Heart right ventricle (tissue), 16 donors: ENCODE measurements at regions of chr4 and their contacts with region 1.

Region 1: GRCh38 chr4:159278399-159278798 is 175.5 kb downstream of the RAPGEF2 start:
- DNase-seq: no peak
- ATAC-seq: peak in 2 of 8 donors; percentile 11 to 58
- H3K4me3 ChIP-seq: no peak overlapping the region
- H3K27ac ChIP-seq: peak overlapping the region in 2 of 10 donors; percentile 24 to 49
- H3K4me1 ChIP-seq: peaks cover 0 to 84% (median 39%) of the 10 kb centered on the region in 9 donors
- H3K27me3 ChIP-seq: no peaks in the 10 kb centered on the region
- CTCF ChIP-seq: no peak

Region 2: DNA sequence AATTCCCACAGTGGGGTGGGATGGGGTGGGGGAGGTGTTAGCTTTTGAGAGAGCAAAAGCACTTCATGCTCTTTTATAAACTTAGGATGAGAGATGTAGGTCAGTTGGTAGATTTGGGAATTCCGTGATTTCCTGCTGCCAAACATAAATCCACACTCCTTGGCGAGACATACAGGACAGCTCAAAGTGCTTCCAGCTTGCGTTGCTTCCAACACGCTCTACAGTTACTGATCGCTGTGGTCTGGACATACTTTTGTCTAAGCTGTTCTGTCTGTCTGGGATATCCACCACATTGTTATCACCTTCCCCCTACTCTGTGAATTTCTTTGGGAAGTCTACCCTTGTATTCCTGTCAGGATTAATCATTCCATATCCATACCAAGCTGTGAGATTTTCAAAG is 58.0 kb before region 1 on chr4:
- intact Hi-C with region 1: loop called in 1 of 10 experiments (anchors 5 kb)
- DNase-seq: no peak
- ATAC-seq: peak in 7 of 8 donors; percentile 53 to 84 (median 76)
- H3K4me3 ChIP-seq: no peak overlapping the region
- H3K27ac ChIP-seq: peak overlapping the region in 7 of 10 donors; percentile 13 to 56 (median 38)
- H3K4me1 ChIP-seq: peaks cover 6 to 79% (median 54%) of the 10 kb centered on the region in 9 donors
- H3K27me3 ChIP-seq: no peaks in the 10 kb centered on the region
- CTCF ChIP-seq: no peak

Region 3: DNA sequence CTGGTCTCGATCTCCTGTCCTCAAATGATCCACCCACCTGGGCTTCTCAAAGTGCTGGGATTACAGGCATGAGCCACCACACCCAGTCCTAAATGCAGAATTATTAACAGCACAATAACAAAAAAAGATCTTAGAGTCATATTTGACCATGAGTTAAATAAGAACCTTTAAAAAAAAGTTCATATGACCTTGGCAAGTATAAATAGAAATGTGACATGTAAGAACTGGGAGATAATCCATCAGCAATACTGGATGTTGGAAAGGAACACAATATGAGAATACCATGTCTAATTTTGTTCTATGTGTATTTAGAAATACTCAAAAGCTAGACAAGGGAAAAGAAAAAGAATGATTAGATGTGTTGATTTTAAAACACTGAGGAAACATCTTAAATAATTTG is 56.1 kb after region 1 on chr4:
- intact Hi-C with region 1: no loop called
- DNase-seq: no peak
- ATAC-seq: peak; percentile 29 to 87 (median 62)
- H3K4me3 ChIP-seq: no peak overlapping the region
- H3K27ac ChIP-seq: peak overlapping the region in 8 of 10 donors; percentile 11 to 82 (median 61)
- H3K4me1 ChIP-seq: peaks cover 0 to 15% (median 10%) of the 10 kb centered on the region in 9 donors
- H3K27me3 ChIP-seq: no peaks in the 10 kb centered on the region
- CTCF ChIP-seq: no peak